ENCODE measurements at regions of chr12 and their contacts with region 1.

Region 1: DNA sequence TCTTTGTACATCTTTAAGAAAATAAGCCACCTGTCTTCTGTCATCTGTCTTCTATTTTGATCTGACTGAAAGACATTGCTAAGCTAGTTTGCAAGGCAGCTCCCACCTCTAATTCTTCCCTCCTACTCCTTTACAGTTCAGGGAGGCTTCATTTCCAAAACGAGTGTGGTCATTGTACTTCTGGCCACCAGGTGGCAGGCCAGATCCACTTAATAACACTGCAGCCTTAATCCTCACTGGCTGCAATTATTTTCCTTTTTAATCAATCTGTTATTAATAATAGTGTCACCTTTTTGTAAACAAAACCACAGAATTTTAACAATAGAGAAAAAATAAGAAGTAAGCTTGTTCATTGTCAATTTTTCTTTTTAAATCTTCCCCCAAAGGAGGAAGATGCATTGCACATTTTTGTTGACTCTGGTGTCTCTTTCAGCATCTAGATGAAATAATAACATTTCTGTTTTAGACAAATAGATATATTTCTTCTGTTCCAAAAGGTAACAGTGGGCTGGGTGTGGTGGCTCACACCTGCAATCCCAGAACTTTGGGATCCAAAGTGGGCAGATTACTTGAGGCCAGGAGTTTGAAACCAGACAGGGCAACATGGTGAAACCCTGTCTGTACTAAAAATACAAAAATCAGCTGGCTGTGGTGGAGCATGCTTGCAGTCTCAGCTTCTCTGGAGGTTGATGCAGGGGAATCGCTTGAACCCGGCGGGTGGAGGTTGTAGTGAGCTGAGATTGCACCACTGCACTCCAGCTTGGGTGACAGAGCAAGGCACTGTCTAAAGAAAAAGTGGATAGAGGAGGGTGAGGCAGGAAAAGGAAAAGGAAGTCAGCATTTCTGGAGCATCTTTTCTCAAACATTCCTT is 23.3 kb downstream of the GABARAPL1 start:
- DNase-seq: peak; percentile 54
- ATAC-seq: peak; percentile 80
- H3K4me3 Mint-ChIP-seq: no peak overlapping the region
- H3K27ac Mint-ChIP-seq: peak overlapping the region; percentile 88
- H3K4me1 Mint-ChIP-seq: peaks cover 41% of the 10 kb centered on the region
- H3K27me3 Mint-ChIP-seq: no peaks in the 10 kb centered on the region

Region 2: DNA sequence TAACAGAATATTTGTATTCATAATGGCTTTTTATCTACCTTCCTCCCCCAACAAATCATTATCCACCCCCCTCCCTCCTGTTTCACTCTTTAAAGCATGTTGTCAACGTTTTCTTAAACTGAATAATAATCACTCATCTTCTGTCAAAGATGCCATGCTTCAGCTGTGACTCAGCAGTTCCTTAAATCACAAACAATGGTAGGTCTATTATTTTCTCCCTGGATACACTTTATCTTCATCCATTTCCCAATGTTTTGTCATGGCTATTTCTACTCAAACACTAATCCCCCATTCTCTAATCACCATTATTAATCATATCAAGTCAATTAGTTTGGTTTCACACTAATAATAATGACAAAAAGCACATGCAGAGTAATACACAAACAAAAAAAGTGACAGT is 219.1 kb before region 1 on chr12:
- CTCF ChIA-PET with region 1: no interaction called
- DNase-seq: no peak
- ATAC-seq: no peak
- H3K4me3 Mint-ChIP-seq: no peak overlapping the region
- H3K27ac Mint-ChIP-seq: no peak overlapping the region
- H3K4me1 Mint-ChIP-seq: no peaks in the 10 kb centered on the region
- H3K27me3 Mint-ChIP-seq: peaks cover 43% of the 10 kb centered on the region

Region 3: DNA sequence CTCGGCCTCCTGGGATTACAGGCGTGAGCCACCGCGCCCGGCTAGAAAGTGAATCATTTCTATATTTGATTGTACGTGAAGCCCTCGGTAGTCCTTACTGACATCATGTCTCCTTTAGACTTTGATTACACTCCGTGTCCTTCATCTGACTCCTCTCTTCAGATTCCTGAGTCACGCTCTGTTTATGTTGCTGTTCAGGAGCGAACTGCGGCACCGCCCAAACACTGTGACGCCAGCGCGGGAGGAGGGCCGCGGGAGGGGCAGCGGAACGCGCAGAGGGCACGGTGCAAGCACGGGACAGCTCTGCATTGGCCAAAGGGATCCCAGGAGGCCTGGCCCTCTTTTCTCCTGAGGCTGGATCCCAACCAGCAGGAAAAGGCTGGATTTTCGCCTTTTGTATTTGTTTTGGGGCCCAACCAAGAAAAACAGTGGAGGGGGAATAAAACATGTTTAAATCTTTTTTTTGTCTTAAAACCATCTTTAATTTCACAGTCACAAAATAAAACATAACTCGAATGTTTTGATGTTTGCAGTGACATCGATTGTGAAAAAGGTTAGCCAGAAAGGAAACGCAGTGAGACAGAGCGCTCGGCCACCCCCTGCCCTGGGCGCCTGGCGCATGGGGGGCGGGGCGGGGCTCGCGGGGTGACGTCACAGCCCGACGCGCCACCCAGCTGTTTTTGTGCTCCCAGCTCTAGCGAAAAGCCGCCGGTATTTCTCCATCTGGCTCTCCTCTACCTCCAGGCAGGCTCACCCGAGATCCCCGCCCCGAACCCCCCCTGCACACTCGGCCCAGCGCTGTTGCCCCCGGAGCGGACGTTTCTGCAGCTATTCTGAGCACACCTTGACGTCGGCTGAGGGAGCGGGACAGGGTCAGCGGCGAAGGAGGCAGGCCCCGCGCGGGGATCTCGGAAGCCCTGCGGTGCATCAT is 23.5 kb before region 1 on chr12 and contains the start of gene GABARAPL1:
- CTCF ChIA-PET with region 1: interaction called, 12 read pairs
- DNase-seq: peak; percentile 92
- ATAC-seq: peak; percentile 79
- H3K4me3 Mint-ChIP-seq: peak within 1 kb of the TSS; percentile 88
- H3K27ac Mint-ChIP-seq: peak within 1 kb of the TSS; percentile 97
- H3K4me1 Mint-ChIP-seq: peaks cover 28% of the 10 kb centered on the region
- H3K27me3 Mint-ChIP-seq: no peaks in the 10 kb centered on the region
- total RNA-seq, gene GABARAPL1: 29.3 to 47.5 TPM

Region 4: GRCh38 chr12:10304161-10304574 is 68.2 kb after region 1 on chr12:
- CTCF ChIA-PET with region 1: interaction called, 20 read pairs
- DNase-seq: peak; percentile 85
- ATAC-seq: peak; percentile 58
- H3K4me3 Mint-ChIP-seq: peak overlapping the region; percentile 83
- H3K27ac Mint-ChIP-seq: peak overlapping the region; percentile 93
- H3K4me1 Mint-ChIP-seq: peaks cover 72% of the 10 kb centered on the region
- H3K27me3 Mint-ChIP-seq: no peaks in the 10 kb centered on the region

Region 5: DNA sequence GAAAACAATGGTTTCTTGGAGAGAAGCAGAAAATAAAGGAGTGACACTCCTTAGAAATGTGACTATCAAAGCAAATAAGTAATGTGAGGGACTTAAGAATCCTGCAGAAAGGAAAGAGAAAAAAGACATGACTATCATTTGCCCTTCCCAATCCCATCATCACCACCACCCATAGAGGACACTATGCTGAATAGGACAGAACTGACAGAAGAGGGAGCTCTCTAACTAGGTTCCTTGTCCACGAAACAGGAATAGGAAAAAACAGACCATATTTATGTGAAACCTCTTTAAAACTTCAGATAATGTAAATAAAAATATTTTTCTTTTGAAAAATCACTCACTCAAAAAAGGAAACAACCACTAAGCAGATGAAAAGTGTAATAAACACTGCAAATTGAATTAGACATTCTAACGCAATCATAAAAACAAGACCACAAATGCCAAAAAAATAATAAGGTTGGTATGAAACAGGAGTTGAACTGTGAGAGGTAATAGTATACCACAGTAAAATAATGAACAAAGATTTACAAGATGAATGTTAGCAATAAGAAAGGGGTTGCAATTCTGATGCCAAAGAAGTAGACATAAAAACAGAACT is 95.7 kb after region 1 on chr12:
- CTCF ChIA-PET with region 1: interaction called, 15 read pairs
- DNase-seq: no peak
- ATAC-seq: peak; percentile 57
- H3K4me3 Mint-ChIP-seq: no peak overlapping the region
- H3K27ac Mint-ChIP-seq: no peak overlapping the region
- H3K4me1 Mint-ChIP-seq: peaks cover 16% of the 10 kb centered on the region
- H3K27me3 Mint-ChIP-seq: no peaks in the 10 kb centered on the region

Region 6: DNA sequence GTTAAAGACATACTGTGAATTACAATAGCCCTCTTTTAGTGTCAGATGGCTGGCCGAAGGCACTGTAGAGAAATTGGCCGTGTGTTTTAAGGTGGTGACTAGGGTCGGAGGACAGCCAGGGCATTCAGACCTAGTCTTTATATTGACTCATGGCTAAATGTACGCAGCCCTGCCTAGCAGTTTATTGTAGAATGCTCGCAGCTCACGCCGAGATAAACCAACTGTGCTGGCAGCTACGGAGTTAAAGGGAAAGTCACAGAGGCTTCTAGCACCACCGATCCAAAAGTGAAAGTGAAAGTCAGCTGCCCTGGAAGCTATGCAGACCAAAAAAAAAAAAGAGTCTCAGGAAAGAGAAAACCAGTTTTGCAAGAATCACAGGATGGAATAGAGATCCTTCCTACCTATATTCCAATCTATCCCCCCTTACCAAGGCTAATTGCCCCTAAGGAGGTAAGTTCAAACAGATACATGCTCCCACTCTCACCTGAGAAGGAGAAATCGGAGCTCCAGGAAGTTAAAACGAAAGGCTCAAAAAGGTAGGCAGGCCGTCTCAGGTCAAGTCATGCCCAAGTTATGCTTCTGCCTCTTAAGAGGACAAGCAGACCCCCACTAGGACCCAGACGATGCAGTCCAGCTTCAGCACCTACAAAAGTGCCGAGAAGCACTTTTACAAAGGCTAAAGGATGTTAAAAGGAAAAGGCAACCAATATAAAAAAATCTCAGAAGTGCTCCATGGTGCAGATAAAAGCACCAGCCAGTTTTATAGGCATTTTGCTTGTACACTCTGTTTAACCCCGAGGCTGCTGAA is 129.0 kb after region 1 on chr12:
- CTCF ChIA-PET with region 1: interaction called, 24 read pairs
- DNase-seq: peak; percentile 85
- ATAC-seq: peak; percentile 68
- H3K4me3 Mint-ChIP-seq: no peak overlapping the region
- H3K27ac Mint-ChIP-seq: no peak overlapping the region
- H3K4me1 Mint-ChIP-seq: peaks cover 38% of the 10 kb centered on the region
- H3K27me3 Mint-ChIP-seq: no peaks in the 10 kb centered on the region

Region 7: DNA sequence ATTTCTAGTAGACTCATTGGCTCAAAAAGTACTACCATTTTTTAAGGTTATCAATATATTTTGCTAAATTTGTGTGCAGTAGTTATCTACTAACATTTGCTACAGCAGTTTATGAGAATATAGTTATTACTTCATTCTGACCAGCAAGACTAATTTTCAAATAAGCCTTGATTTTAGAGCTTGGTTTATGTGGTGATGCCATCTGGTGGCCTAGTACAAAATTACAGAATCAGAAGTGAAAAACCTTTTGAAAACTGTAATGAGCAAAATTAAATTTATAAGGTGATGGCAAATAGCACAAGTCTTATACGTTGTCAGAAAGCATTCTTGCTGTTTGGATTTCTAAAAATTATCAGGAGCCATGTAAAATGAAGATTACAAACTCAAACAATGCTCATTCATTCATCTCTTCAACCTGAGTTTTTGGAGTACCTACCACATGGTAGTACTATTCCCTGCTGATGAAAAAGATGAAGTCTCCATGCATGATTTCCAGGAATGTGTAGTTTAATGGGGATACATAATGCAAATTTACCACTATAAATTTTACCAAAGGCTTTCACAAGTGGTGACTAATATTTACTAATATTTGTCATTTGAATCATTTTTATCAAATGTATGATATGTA is 326.4 kb after region 1 on chr12:
- CTCF ChIA-PET with region 1: interaction called, 18 read pairs
- DNase-seq: no peak
- ATAC-seq: no peak
- H3K4me3 Mint-ChIP-seq: peak overlapping the region; percentile 12
- H3K27ac Mint-ChIP-seq: peak overlapping the region; percentile 29
- H3K4me1 Mint-ChIP-seq: peaks cover 72% of the 10 kb centered on the region
- H3K27me3 Mint-ChIP-seq: no peaks in the 10 kb centered on the region

Region 8: GRCh38 chr12:10749700-10750384 is 513.8 kb after region 1 on chr12:
- CTCF ChIA-PET with region 1: interaction called, 10 read pairs
- DNase-seq: peak; percentile 83
- ATAC-seq: peak; percentile 91
- H3K4me3 Mint-ChIP-seq: peak overlapping the region; percentile 75
- H3K27ac Mint-ChIP-seq: peak overlapping the region; percentile 79
- H3K4me1 Mint-ChIP-seq: peaks cover 29% of the 10 kb centered on the region
- H3K27me3 Mint-ChIP-seq: peaks cover 42% of the 10 kb centered on the region

Measured in activated CD8-positive, alpha-beta memory T cell treated with anti-CD3 and anti-CD28 coated beads, Interleukin-2, amount 10 ng/mL, durations not matched to agents 7 days and 5 days (primary cell).